Activated CD4-positive, alpha-beta memory T cell treated with anti-CD3 and anti-CD28 coated beads for 36 hours (primary cell): ENCODE measurements at regions of chr13 and their contacts with region 1.

Region 1: DNA sequence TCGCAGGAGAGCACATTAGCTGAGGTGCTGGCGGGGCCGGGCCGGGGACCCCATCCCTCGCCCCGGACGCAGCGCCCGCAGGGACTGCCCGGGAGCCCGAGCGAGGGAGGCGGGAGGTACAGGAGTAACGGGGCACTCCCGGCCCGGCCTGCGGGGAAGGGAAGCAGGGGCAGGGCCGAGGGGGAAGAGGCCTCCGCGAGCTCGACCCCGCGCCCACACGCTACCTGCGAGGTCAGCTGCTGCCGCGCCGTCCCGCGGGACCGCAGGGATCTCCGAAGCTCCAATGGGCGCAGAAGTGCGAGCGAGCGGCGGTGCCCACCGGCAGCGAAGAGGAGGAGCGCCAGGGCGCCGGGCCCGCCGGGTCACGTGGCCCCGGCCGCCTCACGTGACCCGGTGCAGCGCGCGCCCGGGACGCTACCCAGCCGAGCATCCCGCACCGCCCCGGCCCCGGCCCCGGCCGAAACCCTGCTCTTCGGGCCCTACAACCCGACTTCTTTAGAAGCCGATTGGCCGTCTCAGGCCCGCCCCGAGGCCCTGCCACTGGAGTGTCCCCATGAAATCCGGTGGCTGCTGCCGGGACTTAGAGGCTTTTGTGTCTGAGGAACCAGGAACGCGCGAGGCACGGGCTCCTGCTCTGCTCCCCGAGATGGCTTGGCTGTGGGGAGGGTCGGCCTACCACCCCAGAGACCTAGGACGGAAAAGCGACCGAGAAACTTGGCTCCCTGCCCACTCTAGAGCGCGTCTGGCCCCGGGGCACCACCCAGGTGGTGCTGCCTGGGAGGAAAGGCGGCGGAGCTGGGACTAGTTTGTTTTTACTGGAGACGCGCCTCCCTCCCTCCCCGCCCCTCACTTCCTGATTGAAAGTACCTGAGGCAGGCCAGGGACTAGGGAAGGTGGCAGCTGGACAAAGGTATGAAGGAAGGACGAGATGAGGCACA is at the start of gene RCBTB1:
- DNase-seq: peak; percentile 74
- H3K4me3 Mint-ChIP-seq: peak within 1 kb of the TSS; percentile 82
- H3K27ac Mint-ChIP-seq: peak within 1 kb of the TSS; percentile 64
- H3K4me1 Mint-ChIP-seq: peaks cover 31% of the 10 kb centered on the region
- H3K27me3 Mint-ChIP-seq: no peaks in the 10 kb centered on the region
- total RNA-seq, gene RCBTB1: 18.7 to 19.3 TPM

Region 2: GRCh38 chr13:48715977-48716376 is 869.5 kb before region 1 on chr13:
- CTCF ChIA-PET with region 1: no interaction called
- POLR2A ChIA-PET with region 1: no interaction called
- intact Hi-C with region 1: no loop called
- DNase-seq: no peak
- H3K4me3 Mint-ChIP-seq: no peak overlapping the region
- H3K27ac Mint-ChIP-seq: no peak overlapping the region
- H3K4me1 Mint-ChIP-seq: no peaks in the 10 kb centered on the region
- H3K27me3 Mint-ChIP-seq: peaks cover 2% of the 10 kb centered on the region

Region 3: GRCh38 chr13:49247643-49248621 is 337.6 kb before region 1 on chr13 and contains the start of gene CDADC1:
- CTCF ChIA-PET with region 1: no interaction called
- POLR2A ChIA-PET with region 1: no interaction called
- intact Hi-C with region 1: loop called (anchors 5 kb)
- DNase-seq: peak; percentile 97
- H3K4me3 Mint-ChIP-seq: peak within 1 kb of the TSS; percentile 90
- H3K27ac Mint-ChIP-seq: peak within 1 kb of the TSS; percentile 88
- H3K4me1 Mint-ChIP-seq: peaks cover 34% of the 10 kb centered on the region
- H3K27me3 Mint-ChIP-seq: no peaks in the 10 kb centered on the region
- total RNA-seq, gene CDADC1: 9.0 to 11.1 TPM

Region 4: DNA sequence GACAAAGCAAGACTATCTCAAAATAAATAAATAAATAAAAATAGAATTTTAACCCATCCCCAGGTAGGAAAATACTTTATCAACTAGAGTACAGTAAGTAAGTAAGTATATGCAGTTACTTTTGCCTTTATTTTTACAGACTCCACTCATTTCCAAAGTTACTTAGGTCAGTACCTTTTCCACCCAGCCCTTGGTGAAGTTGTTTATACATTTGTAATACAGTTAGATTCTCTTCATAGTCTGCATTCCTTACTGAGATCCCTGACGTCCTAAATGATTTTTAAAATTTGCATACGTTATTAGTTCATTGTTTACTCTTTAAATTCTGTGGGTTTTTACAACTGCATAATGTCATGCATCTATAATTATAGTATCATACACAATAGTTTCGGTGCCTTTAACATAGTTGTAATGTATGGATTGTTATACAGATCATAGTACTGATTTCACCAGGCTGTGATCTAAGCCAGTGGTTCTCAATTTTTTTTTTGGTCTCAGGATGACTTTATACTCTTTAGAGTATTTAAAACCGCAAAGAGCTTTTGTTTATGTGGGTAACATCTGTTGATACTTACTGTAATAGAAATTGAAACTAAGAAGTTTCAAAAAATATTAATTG is 131.0 kb before region 1 on chr13:
- CTCF ChIA-PET with region 1: no interaction called
- POLR2A ChIA-PET with region 1: no interaction called
- intact Hi-C with region 1: no loop called
- DNase-seq: no peak
- H3K4me3 Mint-ChIP-seq: no peak overlapping the region
- H3K27ac Mint-ChIP-seq: peak overlapping the region; percentile 79
- H3K4me1 Mint-ChIP-seq: peaks cover 35% of the 10 kb centered on the region
- H3K27me3 Mint-ChIP-seq: no peaks in the 10 kb centered on the region

Region 5: GRCh38 chr13:49539313-49539712 is 46.2 kb before region 1 on chr13:
- CTCF ChIA-PET with region 1: no interaction called
- POLR2A ChIA-PET with region 1: no interaction called
- intact Hi-C with region 1: loop called (anchors 1 kb)
- DNase-seq: no peak
- H3K4me3 Mint-ChIP-seq: no peak overlapping the region
- H3K27ac Mint-ChIP-seq: no peak overlapping the region
- H3K4me1 Mint-ChIP-seq: peaks cover 22% of the 10 kb centered on the region
- H3K27me3 Mint-ChIP-seq: no peaks in the 10 kb centered on the region

Region 6: GRCh38 chr13:49569956-49570689 is 15.4 kb before region 1 on chr13:
- CTCF ChIA-PET with region 1: interaction called, 4 read pairs
- POLR2A ChIA-PET with region 1: interaction called, 3 read pairs
- intact Hi-C with region 1: loop called (anchors 2 kb)
- DNase-seq: peak; percentile 43
- H3K4me3 Mint-ChIP-seq: no peak overlapping the region
- H3K27ac Mint-ChIP-seq: peak overlapping the region; percentile 88
- H3K4me1 Mint-ChIP-seq: peaks cover 33% of the 10 kb centered on the region
- H3K27me3 Mint-ChIP-seq: no peaks in the 10 kb centered on the region

Region 7: DNA sequence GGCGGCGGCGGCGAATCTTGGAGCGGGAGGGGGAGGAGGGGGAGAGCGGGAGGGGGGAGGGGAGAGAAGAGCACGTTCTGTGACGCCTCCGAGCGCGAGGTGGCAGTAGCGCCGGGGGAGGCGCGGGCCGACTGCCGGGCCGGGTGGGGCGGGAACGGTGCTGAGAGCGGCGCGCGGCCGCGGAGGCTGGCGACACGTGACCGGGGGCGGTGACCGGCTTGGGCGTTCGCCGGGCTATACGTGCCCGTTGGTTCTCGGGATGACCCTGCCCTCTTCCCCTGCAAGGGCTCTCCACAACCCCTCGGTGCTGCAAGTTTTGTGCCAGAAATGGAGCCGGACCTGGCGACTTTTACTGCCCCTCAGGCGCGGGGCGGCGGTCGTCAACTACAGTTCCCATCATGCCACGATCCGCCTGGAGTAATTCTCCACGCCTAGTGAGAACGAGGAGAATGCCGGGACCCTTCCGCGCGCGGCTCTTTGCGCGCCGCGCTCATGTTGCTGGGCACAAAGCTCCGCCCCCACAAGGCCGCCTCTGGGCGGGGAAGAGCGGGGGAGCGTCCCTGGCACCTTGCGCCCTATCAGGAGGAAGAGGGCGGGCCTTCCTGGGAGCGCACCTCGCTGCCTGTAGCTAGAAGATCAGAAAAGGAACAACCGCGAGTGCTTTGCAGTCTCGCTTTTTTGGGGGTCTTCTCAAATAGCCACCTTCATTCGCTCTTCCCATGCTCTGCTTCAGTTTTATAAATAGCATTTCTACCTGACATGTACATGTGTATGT is 207.2 kb after region 1 on chr13 and contains the start of gene KPNA3:
- CTCF ChIA-PET with region 1: no interaction called
- POLR2A ChIA-PET with region 1: no interaction called
- intact Hi-C with region 1: loop called (anchors 10 kb)
- DNase-seq: peak; percentile 96
- H3K4me3 Mint-ChIP-seq: peak within 1 kb of the TSS; percentile 91
- H3K27ac Mint-ChIP-seq: peak within 1 kb of the TSS; percentile 93
- H3K4me1 Mint-ChIP-seq: peaks cover 27% of the 10 kb centered on the region
- H3K27me3 Mint-ChIP-seq: no peaks in the 10 kb centered on the region
- total RNA-seq, gene KPNA3: 42.0 to 44.0 TPM